Endothelial cell of umbilical vein (primary cell): ENCODE measurements at regions of chr1 and their contacts with region 1.

Region 1: GRCh38 chr1:198101716-198102453 is 54.9 kb upstream of the NEK7 start:
- DNase-seq: no peak
- H3K4me3 ChIP-seq: no peak overlapping the region
- H3K27ac ChIP-seq: no peak overlapping the region
- H3K4me1 ChIP-seq: no peaks in the 10 kb centered on the region
- H3K27me3 ChIP-seq: no peaks in the 10 kb centered on the region
- CTCF ChIP-seq: no peak
- POLR2A ChIP-seq: no peak

Region 2: GRCh38 chr1:198117267-198117666 is 15.4 kb after region 1 on chr1:
- CTCF ChIA-PET with region 1: interaction called, 3 read pairs
- POLR2A ChIA-PET with region 1: no interaction called
- dilution Hi-C with region 1: no loop called
- intact Hi-C with region 1: loop called (anchors 2 kb)
- DNase-seq: no peak
- H3K4me3 ChIP-seq: no peak overlapping the region
- H3K27ac ChIP-seq: no peak overlapping the region
- H3K4me1 ChIP-seq: peaks cover 20% of the 10 kb centered on the region
- H3K27me3 ChIP-seq: no peaks in the 10 kb centered on the region
- CTCF ChIP-seq: no peak
- POLR2A ChIP-seq: no peak